Colonic mucosa (tissue), 4 donors: ENCODE measurements at regions of chr10 and their contacts with region 1.

Region 1: DNA sequence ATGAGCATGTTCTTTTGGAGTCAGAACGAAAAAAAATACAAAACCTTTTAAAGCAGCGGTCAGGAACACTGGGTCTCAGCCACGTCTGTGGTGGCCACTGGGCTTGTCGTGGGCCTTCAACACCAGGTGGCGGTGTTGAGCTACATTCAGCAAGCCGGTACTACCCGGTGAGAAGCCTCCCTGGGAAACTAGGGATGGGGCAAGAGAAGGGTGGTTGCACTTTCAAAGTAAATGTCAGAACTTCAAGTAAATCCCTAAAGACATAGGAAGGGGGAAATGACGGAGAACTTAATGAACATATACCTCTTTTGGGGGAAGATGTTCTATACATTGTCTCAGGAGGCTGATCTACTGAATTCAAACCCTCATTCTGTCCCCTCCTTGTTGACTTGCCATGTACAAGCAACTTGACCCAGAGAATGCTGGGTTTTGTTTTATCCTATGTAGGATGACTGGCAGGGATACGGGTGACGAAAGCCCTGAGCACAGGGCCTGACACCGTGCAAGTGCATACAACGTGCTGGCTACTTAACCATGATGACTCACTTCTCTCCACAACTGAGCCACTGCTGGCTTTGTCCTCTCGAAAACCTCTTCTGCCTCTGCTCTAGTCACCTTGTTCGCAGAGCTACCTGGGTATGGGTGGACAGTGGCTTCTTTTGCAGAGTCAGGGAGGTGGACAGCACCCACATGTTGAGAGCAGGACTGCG is 49.0 kb upstream of the BAMBI start:
- DNase-seq: peak; percentile 83
- H3K4me3 ChIP-seq: no peak overlapping the region
- H3K27ac ChIP-seq: no peak overlapping the region
- H3K4me1 ChIP-seq: no peaks in the 10 kb centered on the region
- H3K27me3 ChIP-seq: no peaks in the 10 kb centered on the region
- CTCF ChIP-seq: peak; percentile 87

Region 2: GRCh38 chr10:28432210-28432676 is 196.1 kb before region 1 on chr10:
- intact Hi-C with region 1: loop called (anchors 10 kb)
- DNase-seq: peak; percentile 60
- H3K4me3 ChIP-seq: no peak overlapping the region
- H3K27ac ChIP-seq: no peak overlapping the region
- H3K4me1 ChIP-seq: no peaks in the 10 kb centered on the region
- H3K27me3 ChIP-seq: no peaks in the 10 kb centered on the region
- CTCF ChIP-seq: peak; percentile 71

Region 3: DNA sequence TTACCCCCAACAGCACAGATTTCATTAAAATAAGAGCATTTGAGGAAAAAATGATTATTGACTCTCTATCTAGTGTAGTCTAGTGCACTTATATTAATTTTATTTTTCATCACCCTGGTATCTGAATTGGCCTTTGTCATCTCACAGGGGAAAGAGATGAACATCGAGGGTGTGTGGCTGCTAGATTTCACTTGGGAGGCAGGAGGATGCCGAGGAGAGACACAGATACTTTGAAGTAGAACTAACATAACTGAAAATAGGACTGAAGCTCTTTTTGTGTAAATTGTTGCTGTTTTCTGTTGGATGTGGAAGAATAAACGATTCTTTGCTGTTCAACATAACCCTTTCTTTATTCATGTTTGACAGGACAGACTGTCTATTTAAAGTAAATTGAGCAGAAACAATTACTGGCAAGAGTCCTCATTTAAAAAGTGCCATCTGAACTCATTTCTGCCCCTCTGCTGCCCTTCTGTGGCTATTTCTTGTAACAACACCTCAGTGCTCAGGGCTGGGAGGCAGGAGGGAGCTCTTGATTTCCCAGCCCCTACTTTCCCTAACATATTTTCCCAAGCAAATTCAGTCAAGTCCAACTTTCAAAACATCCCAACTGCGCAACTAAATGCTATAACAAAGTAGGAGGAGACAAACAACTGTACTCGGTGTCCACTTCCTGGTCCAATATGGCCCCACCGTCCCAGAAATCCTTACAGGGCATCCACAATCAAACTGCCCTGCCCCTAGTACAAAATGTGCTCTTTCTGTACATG is 676.1 kb after region 1 on chr10:
- intact Hi-C with region 1: loop called (anchors 5 kb)
- DNase-seq: peak; percentile 46
- H3K4me3 ChIP-seq: no peak overlapping the region
- H3K27ac ChIP-seq: no peak overlapping the region
- H3K4me1 ChIP-seq: no peaks in the 10 kb centered on the region
- H3K27me3 ChIP-seq: no peaks in the 10 kb centered on the region
- CTCF ChIP-seq: peak; percentile 62